A673 (cell line): ENCODE measurements at regions of chr22 and their contacts with region 1.

Region 1: GRCh38 chr22:50656122-50657070 is 16.2 kb upstream of the SHANK3 start:
- DNase-seq: no peak
- H3K4me3 ChIP-seq: no peak overlapping the region
- H3K27ac ChIP-seq: no peak overlapping the region
- H3K4me1 ChIP-seq: no peaks in the 10 kb centered on the region
- H3K27me3 ChIP-seq: no peaks in the 10 kb centered on the region
- CTCF ChIP-seq: no peak

Region 2: GRCh38 chr22:50576070-50576469 is 80.3 kb before region 1 on chr22:
- CTCF ChIA-PET with region 1: no interaction called
- POLR2A ChIA-PET with region 1: no interaction called
- intact Hi-C with region 1: no loop called
- DNase-seq: peak; percentile 44
- H3K4me3 ChIP-seq: no peak overlapping the region
- H3K27ac ChIP-seq: no peak overlapping the region
- H3K4me1 ChIP-seq: no peaks in the 10 kb centered on the region
- H3K27me3 ChIP-seq: no peaks in the 10 kb centered on the region
- CTCF ChIP-seq: peak; percentile 50

Region 3: GRCh38 chr22:50691521-50691920 is 35.1 kb after region 1 on chr22:
- CTCF ChIA-PET with region 1: interaction called, 10 read pairs
- POLR2A ChIA-PET with region 1: no interaction called
- intact Hi-C with region 1: no loop called
- DNase-seq: peak; percentile 58
- H3K4me3 ChIP-seq: no peak overlapping the region
- H3K27ac ChIP-seq: no peak overlapping the region
- H3K4me1 ChIP-seq: no peaks in the 10 kb centered on the region
- H3K27me3 ChIP-seq: no peaks in the 10 kb centered on the region
- CTCF ChIP-seq: peak; percentile 70

Region 4: GRCh38 chr22:50713571-50714056 is 57.2 kb after region 1 on chr22:
- CTCF ChIA-PET with region 1: no interaction called
- POLR2A ChIA-PET with region 1: no interaction called
- intact Hi-C with region 1: no loop called
- DNase-seq: no peak
- H3K4me3 ChIP-seq: no peak overlapping the region
- H3K27ac ChIP-seq: no peak overlapping the region
- H3K4me1 ChIP-seq: no peaks in the 10 kb centered on the region
- H3K27me3 ChIP-seq: no peaks in the 10 kb centered on the region
- CTCF ChIP-seq: no peak